ENCODE measurements at regions of chr6 and their contacts with region 1.

Region 1: GRCh38 chr6:422433-423054 is 31.0 kb downstream of the IRF4 start:
- DNase-seq: peak; percentile 87
- H3K4me3 Mint-ChIP-seq: no peak overlapping the region
- H3K27ac Mint-ChIP-seq: peak overlapping the region; percentile 87
- H3K4me1 Mint-ChIP-seq: peaks cover 30% of the 10 kb centered on the region
- H3K27me3 Mint-ChIP-seq: no peaks in the 10 kb centered on the region

Region 2: GRCh38 chr6:551405-551804 is 128.9 kb after region 1 on chr6:
- CTCF ChIA-PET with region 1: no interaction called
- POLR2A ChIA-PET with region 1: no interaction called
- intact Hi-C with region 1: loop called (anchors 2 kb)
- DNase-seq: peak; percentile 68
- H3K4me3 Mint-ChIP-seq: no peak overlapping the region
- H3K27ac Mint-ChIP-seq: peak overlapping the region; percentile 97
- H3K4me1 Mint-ChIP-seq: peaks cover 69% of the 10 kb centered on the region
- H3K27me3 Mint-ChIP-seq: no peaks in the 10 kb centered on the region